CD4-positive, alpha-beta T cell (primary cell): ENCODE measurements at regions of chr17 and their contacts with region 1.

Region 1: DNA sequence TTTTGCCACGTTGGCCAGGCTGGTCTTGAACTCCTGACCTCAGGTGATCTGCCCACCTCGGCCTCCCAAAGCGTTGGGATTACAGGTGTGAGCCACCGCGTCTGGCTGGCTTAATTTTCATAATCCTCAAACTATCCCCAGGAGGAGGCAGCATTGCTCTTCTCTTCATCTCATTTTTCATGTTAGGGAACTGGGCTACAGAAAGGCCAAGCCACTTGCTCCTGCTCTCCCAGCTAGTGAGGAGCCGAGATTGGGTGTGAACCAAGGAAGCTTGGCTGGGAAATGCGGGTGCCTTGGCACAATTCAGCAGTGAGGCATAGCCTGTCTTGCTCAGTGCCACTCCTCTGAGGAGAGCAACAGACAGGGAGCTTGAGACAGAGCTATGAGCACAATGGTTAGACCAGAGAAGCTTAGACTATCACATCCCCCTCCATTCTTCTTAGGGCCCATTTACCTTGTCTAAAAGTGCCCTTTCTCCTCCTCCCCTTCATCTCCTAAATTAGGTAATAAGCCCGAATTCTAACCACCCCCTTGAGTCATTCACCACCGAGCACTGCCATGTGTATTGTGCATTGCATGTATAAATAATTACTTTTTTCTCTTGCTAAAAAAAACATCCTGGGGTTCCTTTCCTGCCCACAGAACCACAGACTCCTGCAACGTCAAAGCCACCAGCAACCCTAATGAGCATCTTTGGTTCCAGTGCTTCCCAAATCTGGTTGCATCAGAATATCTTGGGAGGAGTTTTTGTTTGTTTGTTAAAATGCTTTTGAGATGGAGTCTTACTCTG is 20.0 kb upstream of the KIF19 start:
- DNase-seq: no peak
- ATAC-seq: no peak
- H3K4me3 ChIP-seq: no peak overlapping the region
- H3K4me3 Mint-ChIP-seq: no peak overlapping the region
- H3K27ac ChIP-seq: no peak overlapping the region
- H3K27ac Mint-ChIP-seq: no peak overlapping the region
- H3K4me1 ChIP-seq: peaks cover 10% of the 10 kb centered on the region
- H3K4me1 Mint-ChIP-seq: peaks cover 6% of the 10 kb centered on the region
- H3K27me3 ChIP-seq: no peaks in the 10 kb centered on the region
- H3K27me3 Mint-ChIP-seq: no peaks in the 10 kb centered on the region
- CTCF ChIP-seq: no peak

Region 2: GRCh38 chr17:74224959-74225725 is 80.9 kb before region 1 on chr17:
- CTCF ChIA-PET with region 1: no interaction called
- POLR2A ChIA-PET with region 1: no interaction called
- intact Hi-C with region 1: no loop called
- DNase-seq: no peak
- ATAC-seq: no peak
- H3K4me3 ChIP-seq: no peak overlapping the region
- H3K4me3 Mint-ChIP-seq: no peak overlapping the region
- H3K27ac ChIP-seq: no peak overlapping the region
- H3K27ac Mint-ChIP-seq: no peak overlapping the region
- H3K4me1 ChIP-seq: no peaks in the 10 kb centered on the region
- H3K4me1 Mint-ChIP-seq: no peaks in the 10 kb centered on the region
- H3K27me3 ChIP-seq: no peaks in the 10 kb centered on the region
- H3K27me3 Mint-ChIP-seq: no peaks in the 10 kb centered on the region
- CTCF ChIP-seq: no peak

Region 3: DNA sequence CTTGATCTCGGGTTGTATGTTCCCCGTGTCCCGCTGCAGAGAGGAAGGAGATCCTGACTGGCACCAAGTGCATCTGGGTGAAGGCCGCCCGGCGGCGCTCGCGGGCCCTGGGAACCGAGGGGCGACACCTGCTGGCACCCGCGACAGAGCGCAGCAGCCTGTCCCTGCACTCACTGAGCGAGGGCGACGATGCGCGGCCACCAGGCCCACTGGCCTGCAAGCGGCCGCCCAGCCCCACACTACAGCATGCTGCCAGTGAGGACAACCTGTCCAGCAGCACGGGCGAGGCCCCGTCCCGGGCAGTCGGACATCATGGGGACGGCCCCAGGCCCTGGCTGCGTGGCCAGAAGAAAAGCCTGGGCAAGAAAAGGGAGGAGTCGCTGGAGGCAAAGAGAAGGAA is 48.1 kb after region 1 on chr17:
- CTCF ChIA-PET with region 1: no interaction called
- POLR2A ChIA-PET with region 1: no interaction called
- intact Hi-C with region 1: loop called (anchors 5 kb)
- DNase-seq: peak in 11 of 14 experiments; percentile 30 to 70 (median 40)
- ATAC-seq: peak; percentile 71
- H3K4me3 ChIP-seq: no peak overlapping the region
- H3K4me3 Mint-ChIP-seq: no peak overlapping the region
- H3K27ac ChIP-seq: no peak overlapping the region
- H3K27ac Mint-ChIP-seq: no peak overlapping the region
- H3K4me1 ChIP-seq: peaks cover 26% of the 10 kb centered on the region
- H3K4me1 Mint-ChIP-seq: peaks cover 4% of the 10 kb centered on the region
- H3K27me3 ChIP-seq: peaks cover 54 to 75% of the 10 kb centered on the region in 2 experiments
- H3K27me3 Mint-ChIP-seq: peaks cover 65% of the 10 kb centered on the region
- CTCF ChIP-seq: peak; percentile 30

Region 4: DNA sequence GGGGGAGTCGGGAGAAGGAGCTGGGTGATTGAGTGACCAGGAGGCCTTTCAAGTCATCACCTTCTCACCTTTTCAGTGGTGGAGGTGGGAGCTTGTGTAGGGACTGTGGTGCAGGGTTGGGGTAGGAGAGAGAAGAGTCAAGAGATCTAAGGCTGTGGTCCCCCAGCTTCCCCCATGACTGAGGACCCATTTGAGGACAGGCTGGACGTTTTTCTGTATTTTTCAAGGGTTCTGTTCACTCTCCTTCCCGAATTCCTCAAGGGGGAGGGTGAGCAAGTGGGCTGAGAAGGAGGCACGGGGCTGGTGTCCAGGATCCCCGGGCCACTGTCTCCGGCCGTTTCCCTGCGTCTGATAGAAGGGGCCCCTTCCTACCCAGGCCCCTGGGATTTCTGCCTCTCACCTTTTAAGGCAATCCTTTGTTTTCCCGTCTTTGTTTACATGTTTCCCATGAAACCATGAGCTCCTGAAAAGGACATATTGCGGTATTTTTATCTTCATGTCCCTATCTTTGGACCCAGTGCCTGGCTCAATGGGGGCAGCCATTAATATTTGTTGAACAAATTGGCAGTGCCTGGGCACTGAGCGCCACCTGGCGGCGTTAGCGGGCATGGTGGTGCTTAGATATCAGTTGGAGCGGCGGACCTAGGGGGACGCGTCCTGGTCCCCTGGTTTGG is 151.2 kb after region 1 on chr17:
- CTCF ChIA-PET with region 1: no interaction called
- POLR2A ChIA-PET with region 1: no interaction called
- intact Hi-C with region 1: loop called (anchors 5 kb)
- DNase-seq: peak; percentile 45 to 86 (median 67)
- ATAC-seq: peak; percentile 60
- H3K4me3 ChIP-seq: no peak overlapping the region
- H3K4me3 Mint-ChIP-seq: peak overlapping the region; percentile 51
- H3K27ac ChIP-seq: no peak overlapping the region
- H3K27ac Mint-ChIP-seq: no peak overlapping the region
- H3K4me1 ChIP-seq: peaks cover 68% of the 10 kb centered on the region
- H3K4me1 Mint-ChIP-seq: peaks cover 27% of the 10 kb centered on the region
- H3K27me3 ChIP-seq: peaks cover 0 to 3% of the 10 kb centered on the region in 2 experiments
- H3K27me3 Mint-ChIP-seq: peaks cover 6% of the 10 kb centered on the region
- CTCF ChIP-seq: peak; percentile 83

Region 5: DNA sequence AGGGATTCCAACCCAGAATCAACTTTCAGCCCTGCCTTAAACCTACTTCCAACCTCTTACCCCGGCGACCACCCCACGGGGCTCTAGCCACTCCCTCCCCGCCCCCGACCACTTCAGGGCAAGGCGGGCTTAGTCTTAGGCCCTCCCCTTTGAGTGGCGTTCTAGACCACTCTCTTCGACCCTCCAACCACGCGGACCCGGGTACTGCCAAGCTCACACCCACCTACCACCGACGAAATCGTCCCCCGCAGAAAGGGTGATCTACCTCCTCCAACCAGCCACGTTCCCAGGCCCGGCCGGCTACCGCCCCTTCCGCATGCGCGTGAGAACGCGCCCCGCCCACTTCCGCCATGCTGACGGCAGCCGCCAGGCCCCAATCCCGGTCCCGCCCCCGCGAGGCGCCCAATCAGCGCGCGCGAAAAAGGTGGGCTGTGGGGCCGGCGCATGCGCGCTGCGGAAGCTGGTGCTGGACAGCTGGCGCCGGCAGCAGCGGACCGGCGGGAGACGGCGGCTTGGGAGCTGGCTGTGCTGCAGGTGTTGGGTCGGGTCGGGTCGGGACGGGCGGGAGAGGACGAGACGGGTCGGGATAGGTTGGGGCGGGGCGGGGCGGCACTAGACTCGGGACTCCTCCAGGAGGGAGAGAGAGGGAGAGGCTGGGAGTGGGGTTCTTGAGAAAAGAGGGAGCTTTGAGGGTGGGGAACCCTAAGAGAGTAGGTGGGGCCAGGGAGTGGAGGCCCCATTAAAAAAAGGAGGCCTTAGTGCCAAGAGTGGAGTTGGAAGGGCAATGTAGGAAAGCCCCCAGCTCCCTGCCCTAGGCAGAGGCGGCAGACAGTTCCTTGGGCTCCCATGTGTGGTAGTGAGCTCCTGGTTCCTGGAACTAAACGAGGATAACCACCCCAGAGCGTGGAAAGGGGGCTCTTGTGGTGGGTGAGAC is 470.3 kb after region 1 on chr17 and contains the start of gene NAT9:
- CTCF ChIA-PET with region 1: no interaction called
- POLR2A ChIA-PET with region 1: no interaction called
- intact Hi-C with region 1: no loop called
- DNase-seq: peak; percentile 96 to 100 (median 99)
- ATAC-seq: peak; percentile 72
- H3K4me3 ChIP-seq: peak within 1 kb of the TSS; percentile 79
- H3K4me3 Mint-ChIP-seq: peak within 1 kb of the TSS; percentile 99
- H3K27ac ChIP-seq: peak within 1 kb of the TSS; percentile 48 to 51
- H3K27ac Mint-ChIP-seq: peak within 1 kb of the TSS; percentile 86
- H3K4me1 ChIP-seq: peaks cover 77% of the 10 kb centered on the region
- H3K4me1 Mint-ChIP-seq: peaks cover 64% of the 10 kb centered on the region
- H3K27me3 ChIP-seq: no peaks in the 10 kb centered on the region
- H3K27me3 Mint-ChIP-seq: no peaks in the 10 kb centered on the region
- CTCF ChIP-seq: no peak
- total RNA-seq, gene NAT9: 34.6 to 38.2 TPM